ENCODE measurements at regions of chr10 and their contacts with region 1.

Region 1: DNA sequence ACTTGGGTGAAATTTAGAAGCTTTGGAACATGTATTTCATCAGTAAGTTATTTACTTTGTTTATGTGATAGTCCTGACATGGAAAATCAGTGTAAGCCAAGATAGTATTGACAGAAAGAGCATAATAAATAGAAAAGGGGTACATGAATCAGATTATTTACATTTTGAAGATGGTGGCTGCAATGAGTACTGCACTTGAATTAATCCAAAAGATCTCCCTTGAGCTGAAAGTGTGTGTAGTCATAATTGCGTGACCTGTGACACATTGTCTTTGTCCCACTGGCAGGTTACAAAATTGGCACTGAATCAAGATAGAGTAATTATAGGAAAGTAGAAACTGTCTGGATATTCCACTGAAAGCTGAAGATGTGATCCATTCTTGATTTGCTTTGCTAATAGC is 562.8 kb downstream of the GFRA1 start:
- DNase-seq: no peak
- H3K4me3 ChIP-seq: no peak overlapping the region
- H3K27ac ChIP-seq: no peak overlapping the region
- H3K4me1 ChIP-seq: no peaks in the 10 kb centered on the region
- H3K27me3 ChIP-seq: no peaks in the 10 kb centered on the region
- CTCF ChIP-seq: no peak

Region 2: DNA sequence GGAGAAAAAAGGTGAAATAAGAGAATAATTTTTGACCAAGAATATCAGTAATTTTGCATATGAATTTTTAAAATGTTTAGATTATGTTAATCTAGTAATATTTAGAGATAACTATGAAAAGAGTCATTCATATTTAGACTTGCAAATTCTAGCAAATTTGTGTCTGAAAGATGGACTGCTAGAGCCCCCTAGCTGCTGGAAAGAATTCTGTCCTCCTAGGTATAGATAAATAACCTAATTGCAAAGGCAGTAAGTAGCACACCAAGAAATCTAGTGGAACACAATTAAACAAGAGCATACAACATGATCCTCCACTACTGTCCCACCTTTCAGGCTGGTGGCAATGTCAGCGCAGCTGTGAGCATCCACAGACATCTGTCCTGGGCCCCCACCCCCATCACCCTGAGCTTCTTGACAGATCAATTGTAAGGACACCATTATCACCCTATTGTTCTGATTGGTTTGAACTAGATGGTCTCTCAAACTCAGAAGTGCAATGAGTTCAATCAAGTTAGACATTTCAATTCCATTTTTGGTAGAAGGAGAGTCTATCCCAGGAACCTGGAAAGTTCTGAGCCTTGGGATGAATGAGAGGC is 577.8 kb after region 1 on chr10:
- intact Hi-C with region 1: loop called (anchors 10 kb)
- DNase-seq: peak in 4 of 5 donors; percentile 36 to 80 (median 60)
- H3K4me3 ChIP-seq: no peak overlapping the region
- H3K27ac ChIP-seq: no peak overlapping the region
- H3K4me1 ChIP-seq: no peaks in the 10 kb centered on the region
- H3K27me3 ChIP-seq: no peaks in the 10 kb centered on the region
- CTCF ChIP-seq: peak; percentile 70